ENCODE measurements at regions of chr22 and their contacts with region 1.

Region 1: DNA sequence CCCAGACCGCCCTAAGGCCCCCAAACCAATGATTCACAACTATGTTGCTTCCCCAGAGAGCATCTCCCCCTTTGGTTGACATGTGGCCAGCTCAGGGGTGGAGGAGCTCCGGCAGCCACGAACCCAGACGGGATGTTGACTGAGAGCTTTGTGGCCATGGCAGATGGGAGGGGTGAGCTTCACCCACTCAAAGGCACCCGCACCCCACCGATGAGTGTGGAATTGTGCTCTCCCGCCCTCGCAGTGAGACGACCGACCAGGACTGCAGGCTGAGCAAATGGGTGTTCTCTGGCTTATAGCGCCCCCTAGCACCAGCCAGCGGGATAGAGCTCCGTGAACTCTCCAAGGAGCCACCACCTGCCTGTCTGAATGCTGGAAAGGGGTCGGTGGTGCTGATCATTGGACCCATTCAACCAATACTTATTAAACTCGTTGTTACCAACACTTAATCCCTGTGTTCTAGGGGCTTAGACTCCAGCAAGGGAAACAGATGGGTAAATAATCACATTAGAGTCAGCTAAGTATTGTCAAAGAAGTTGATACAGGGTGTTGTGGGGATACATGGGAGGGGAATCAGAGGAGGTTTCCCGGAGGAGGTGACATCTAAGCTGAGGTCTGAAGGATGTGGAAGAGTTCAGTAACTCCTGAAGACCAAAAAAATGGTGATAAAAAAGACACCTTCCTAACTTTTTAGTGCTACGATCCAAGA is 4.5 kb upstream of the TIMP3 start:
- DNase-seq: peak; percentile 84
- ATAC-seq: peak; percentile 55

Region 2: GRCh38 chr22:32660292-32660691 is 136.7 kb before region 1 on chr22:
- intact Hi-C with region 1: loop called (anchors 2 kb)
- DNase-seq: peak; percentile 82
- ATAC-seq: peak; percentile 77

Region 3: GRCh38 chr22:32846901-32847491 is 50.0 kb after region 1 on chr22:
- intact Hi-C with region 1: no loop called
- DNase-seq: peak; percentile 57
- ATAC-seq: peak; percentile 6

Region 4: GRCh38 chr22:32985899-32986765 is 189.1 kb after region 1 on chr22:
- intact Hi-C with region 1: loop called (anchors 5 kb)
- DNase-seq: peak; percentile 52
- ATAC-seq: peak; percentile 97